A673 (cell line): ENCODE measurements at regions of chr3 and their contacts with region 1.

Region 1: GRCh38 chr3:195512798-195513345 is 30.3 kb downstream of the PPP1R2 start:
- DNase-seq: no peak
- H3K4me3 ChIP-seq: no peak overlapping the region
- H3K27ac ChIP-seq: no peak overlapping the region
- H3K4me1 ChIP-seq: no peaks in the 10 kb centered on the region
- H3K27me3 ChIP-seq: no peaks in the 10 kb centered on the region
- CTCF ChIP-seq: no peak

Region 2: GRCh38 chr3:195403852-195404408 is 108.9 kb before region 1 on chr3:
- CTCF ChIA-PET with region 1: no interaction called
- POLR2A ChIA-PET with region 1: no interaction called
- intact Hi-C with region 1: no loop called
- DNase-seq: no peak
- H3K4me3 ChIP-seq: no peak overlapping the region
- H3K27ac ChIP-seq: no peak overlapping the region
- H3K4me1 ChIP-seq: peaks cover 7% of the 10 kb centered on the region
- H3K27me3 ChIP-seq: no peaks in the 10 kb centered on the region
- CTCF ChIP-seq: no peak

Region 3: DNA sequence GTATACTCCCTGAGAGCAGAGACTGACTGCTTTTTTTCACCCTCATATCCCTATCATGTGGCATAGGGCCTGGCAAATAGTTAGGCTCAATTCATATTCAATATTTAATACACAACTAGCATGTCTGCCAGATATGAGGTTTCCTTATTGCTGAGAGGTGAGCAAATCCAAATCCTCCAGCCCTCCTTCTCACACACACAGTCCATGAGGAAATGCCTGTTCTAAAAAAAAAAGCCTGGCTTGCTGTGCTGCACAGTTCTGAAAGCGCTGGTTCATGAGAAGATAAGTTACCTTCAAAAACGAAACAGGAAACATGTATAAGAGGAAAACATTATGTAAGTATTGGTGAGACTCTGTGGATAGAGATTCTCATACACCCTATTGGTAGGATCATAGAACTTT is 54.6 kb before region 1 on chr3:
- CTCF ChIA-PET with region 1: no interaction called
- POLR2A ChIA-PET with region 1: no interaction called
- intact Hi-C with region 1: loop called (anchors 5 kb)
- DNase-seq: no peak
- H3K4me3 ChIP-seq: no peak overlapping the region
- H3K27ac ChIP-seq: no peak overlapping the region
- H3K4me1 ChIP-seq: no peaks in the 10 kb centered on the region
- H3K27me3 ChIP-seq: no peaks in the 10 kb centered on the region
- CTCF ChIP-seq: no peak